ENCODE measurements at regions of chr2 and their contacts with region 1.

Region 1: GRCh38 chr2:207166039-207166348 is 246 bp upstream of the KLF7 start:
- DNase-seq: peak; percentile 88 to 99 (median 98)
- ATAC-seq: peak; percentile 93
- H3K4me3 ChIP-seq: peak overlapping the region; percentile 89
- H3K4me3 Mint-ChIP-seq: peak overlapping the region; percentile 94 to 100 (median 98)
- H3K27ac ChIP-seq: peak overlapping the region; percentile 100
- H3K27ac Mint-ChIP-seq: peak overlapping the region; percentile 93 to 99 (median 97)
- H3K4me1 ChIP-seq: peaks cover 0 to 17% of the 10 kb centered on the region in 2 donors
- H3K4me1 Mint-ChIP-seq: peaks cover 32 to 48% (median 36%) of the 10 kb centered on the region in 7 donors
- H3K27me3 ChIP-seq: no peaks in the 10 kb centered on the region
- H3K27me3 Mint-ChIP-seq: peaks cover 0 to 2% (median 0%) of the 10 kb centered on the region in 5 donors

Region 2: GRCh38 chr2:206856513-206856912 is 309.5 kb before region 1 on chr2:
- CTCF ChIA-PET with region 1: no interaction called
- POLR2A ChIA-PET with region 1: no interaction called
- intact Hi-C with region 1: loop called in 1 of 2 experiments (anchors 10 kb)
- DNase-seq: no peak
- ATAC-seq: no peak
- H3K4me3 ChIP-seq: no peak overlapping the region
- H3K4me3 Mint-ChIP-seq: no peak overlapping the region
- H3K27ac ChIP-seq: no peak overlapping the region
- H3K27ac Mint-ChIP-seq: peak overlapping the region in 2 of 9 donors; percentile 23 to 60
- H3K4me1 ChIP-seq: peaks cover 7 to 18% of the 10 kb centered on the region in 2 donors
- H3K4me1 Mint-ChIP-seq: peaks cover 19 to 33% (median 25%) of the 10 kb centered on the region in 7 donors
- H3K27me3 ChIP-seq: no peaks in the 10 kb centered on the region
- H3K27me3 Mint-ChIP-seq: no peaks in the 10 kb centered on the region

Region 3: GRCh38 chr2:207115715-207116364 is 50.2 kb before region 1 on chr2:
- CTCF ChIA-PET with region 1: interaction called, 4 read pairs
- POLR2A ChIA-PET with region 1: interaction called, 23 read pairs
- intact Hi-C with region 1: loop called in 1 of 2 experiments (anchors 10 kb)
- DNase-seq: no peak
- ATAC-seq: no peak
- H3K4me3 ChIP-seq: no peak overlapping the region
- H3K4me3 Mint-ChIP-seq: no peak overlapping the region
- H3K27ac ChIP-seq: no peak overlapping the region
- H3K27ac Mint-ChIP-seq: no peak overlapping the region
- H3K4me1 ChIP-seq: peaks cover 0 to 7% of the 10 kb centered on the region in 2 donors
- H3K4me1 Mint-ChIP-seq: peaks cover 15 to 88% (median 56%) of the 10 kb centered on the region in 7 donors
- H3K27me3 ChIP-seq: no peaks in the 10 kb centered on the region
- H3K27me3 Mint-ChIP-seq: no peaks in the 10 kb centered on the region

Region 4: DNA sequence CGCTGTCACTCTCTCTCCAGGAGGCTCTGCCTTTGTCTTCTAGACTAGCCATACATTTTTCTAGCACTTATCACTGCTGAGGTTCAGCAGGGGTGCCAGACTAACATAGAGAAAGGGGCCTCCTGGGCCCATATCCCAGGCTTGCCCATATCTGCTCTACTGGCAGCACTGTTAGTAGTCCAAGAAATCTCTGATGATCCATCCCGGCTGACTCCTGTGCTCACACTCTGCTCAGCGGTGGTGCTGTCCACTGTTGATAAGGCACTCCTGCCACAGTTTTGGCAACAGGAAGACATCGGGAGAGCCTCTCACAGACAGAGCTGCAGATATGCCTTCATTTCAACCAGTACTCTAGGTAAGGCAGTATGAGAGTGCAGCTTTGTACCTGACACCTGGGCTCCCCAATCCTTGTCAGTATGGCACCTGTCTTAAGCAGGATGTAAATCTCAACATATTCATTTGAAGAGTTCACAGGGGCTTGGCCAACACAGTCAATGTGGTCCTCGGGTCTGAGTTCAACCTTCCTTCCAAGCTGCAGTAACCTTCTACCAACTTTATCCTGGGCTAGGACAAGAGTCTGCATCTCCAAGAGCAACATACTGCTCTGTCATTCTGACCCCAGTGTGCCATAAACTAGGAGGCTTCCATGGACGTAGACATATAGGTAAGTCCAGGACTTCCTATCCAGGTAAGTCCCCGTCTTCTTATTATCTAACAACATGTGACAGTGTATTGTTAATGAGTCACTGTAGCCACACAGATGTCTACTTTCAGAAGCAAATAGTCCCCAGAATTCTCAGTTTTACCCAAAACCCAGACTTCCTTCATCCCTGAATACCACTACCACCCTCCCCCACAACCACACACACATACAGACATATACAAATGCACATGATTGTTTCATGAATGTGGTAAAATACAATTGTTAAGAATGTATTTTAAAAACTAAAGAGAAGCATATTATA is 16.5 kb before region 1 on chr2:
- CTCF ChIA-PET with region 1: interaction called, 61 read pairs
- POLR2A ChIA-PET with region 1: interaction called, 433 read pairs
- intact Hi-C with region 1: no loop called
- DNase-seq: peak in 1 of 9 donors; percentile 29
- ATAC-seq: peak; percentile 14
- H3K4me3 ChIP-seq: no peak overlapping the region
- H3K4me3 Mint-ChIP-seq: peak overlapping the region in 8 of 10 donors; percentile 6 to 60 (median 50)
- H3K27ac ChIP-seq: no peak overlapping the region
- H3K27ac Mint-ChIP-seq: peak overlapping the region in 7 of 9 donors; percentile 63 to 99 (median 81)
- H3K4me1 ChIP-seq: peaks cover 0 to 50% of the 10 kb centered on the region in 2 donors
- H3K4me1 Mint-ChIP-seq: peaks cover 65 to 98% (median 94%) of the 10 kb centered on the region in 7 donors
- H3K27me3 ChIP-seq: no peaks in the 10 kb centered on the region
- H3K27me3 Mint-ChIP-seq: peaks cover 0 to 6% (median 0%) of the 10 kb centered on the region in 5 donors

Region 5: GRCh38 chr2:207473049-207473930 is 307.3 kb after region 1 on chr2:
- CTCF ChIA-PET with region 1: no interaction called
- POLR2A ChIA-PET with region 1: interaction called, 4 read pairs
- intact Hi-C with region 1: loop called (anchors 1 to 2 kb)
- DNase-seq: peak in 8 of 9 donors; percentile 25 to 68 (median 52)
- ATAC-seq: peak; percentile 76
- H3K4me3 ChIP-seq: no peak overlapping the region
- H3K4me3 Mint-ChIP-seq: peak overlapping the region in 4 of 10 donors; percentile 20 to 52 (median 42)
- H3K27ac ChIP-seq: no peak overlapping the region
- H3K27ac Mint-ChIP-seq: peak overlapping the region in 7 of 9 donors; percentile 14 to 71 (median 48)
- H3K4me1 ChIP-seq: no peaks in the 10 kb centered on the region
- H3K4me1 Mint-ChIP-seq: peaks cover 6 to 23% (median 18%) of the 10 kb centered on the region in 7 donors
- H3K27me3 ChIP-seq: no peaks in the 10 kb centered on the region
- H3K27me3 Mint-ChIP-seq: peaks cover 0 to 4% (median 0%) of the 10 kb centered on the region in 5 donors

Region 6: GRCh38 chr2:208254871-208255556 is 1089.0 kb after region 1 on chr2 and contains the start of gene IDH1:
- CTCF ChIA-PET with region 1: no interaction called
- POLR2A ChIA-PET with region 1: no interaction called
- intact Hi-C with region 1: loop called in 1 of 2 experiments (anchors 10 kb)
- DNase-seq: peak; percentile 79 to 97 (median 88)
- ATAC-seq: peak; percentile 95
- H3K4me3 ChIP-seq: peak within 1 kb of the TSS; percentile 70
- H3K4me3 Mint-ChIP-seq: peak within 1 kb of the TSS; percentile 93 to 100 (median 97)
- H3K27ac ChIP-seq: peak within 1 kb of the TSS; percentile 62
- H3K27ac Mint-ChIP-seq: peak within 1 kb of the TSS; percentile 47 to 91 (median 79)
- H3K4me1 ChIP-seq: peaks cover 0 to 9% of the 10 kb centered on the region in 2 donors
- H3K4me1 Mint-ChIP-seq: peaks cover 8 to 28% (median 23%) of the 10 kb centered on the region in 7 donors
- H3K27me3 ChIP-seq: no peaks in the 10 kb centered on the region
- H3K27me3 Mint-ChIP-seq: peaks cover 0 to 3% (median 0%) of the 10 kb centered on the region in 5 donors
- total RNA-seq, gene IDH1: 5.0 to 26.4 (median 20.4) TPM